ENCODE measurements at regions of chr6 and their contacts with region 1.

Region 1: DNA sequence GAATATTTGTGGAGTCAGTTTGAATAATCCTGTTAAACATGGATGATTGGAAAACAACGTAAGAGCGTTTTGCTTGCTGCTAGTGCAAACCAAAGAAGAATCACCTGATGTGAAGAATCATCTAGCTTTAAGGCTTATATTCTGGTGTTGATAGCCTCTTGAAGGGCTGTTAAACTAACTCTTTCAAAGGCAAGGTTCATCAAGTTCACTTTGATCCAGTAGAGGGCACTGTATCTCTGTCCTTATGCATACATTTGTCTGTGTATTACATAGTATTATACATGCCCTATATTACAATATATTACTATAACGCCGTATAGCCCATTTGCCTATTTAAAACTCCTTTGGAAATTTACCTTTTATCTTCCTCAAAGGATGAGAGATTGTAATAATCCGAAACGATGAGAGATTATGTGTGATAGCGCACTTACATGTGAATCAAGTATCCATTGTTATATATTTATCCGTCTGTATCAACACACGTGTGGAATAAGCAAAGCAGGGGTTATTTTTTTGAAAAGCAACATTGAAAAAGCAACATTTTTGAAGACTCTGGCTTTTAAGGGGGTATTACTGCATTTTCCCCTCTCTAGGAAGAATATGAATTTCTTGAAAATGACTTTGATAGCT is 50.8 kb upstream of the NRN1 start:
- DNase-seq: peak; percentile 36
- H3K4me3 ChIP-seq: no peak overlapping the region
- H3K27ac ChIP-seq: no peak overlapping the region
- H3K4me1 ChIP-seq: no peaks in the 10 kb centered on the region
- H3K27me3 ChIP-seq: no peaks in the 10 kb centered on the region
- CTCF ChIP-seq: peak; percentile 62 to 65

Region 2: GRCh38 chr6:6505111-6505510 is 447.6 kb after region 1 on chr6:
- CTCF ChIA-PET with region 1: no interaction called
- dilution Hi-C with region 1: no loop called
- in situ Hi-C with region 1: loop called in 1 of 2 experiments (anchors 10 kb)
- intact Hi-C with region 1: no loop called
- DNase-seq: no peak
- H3K4me3 ChIP-seq: no peak overlapping the region
- H3K27ac ChIP-seq: no peak overlapping the region
- H3K4me1 ChIP-seq: no peaks in the 10 kb centered on the region
- H3K27me3 ChIP-seq: no peaks in the 10 kb centered on the region
- CTCF ChIP-seq: peak; percentile 15 to 28

Measured in mammary epithelial cell (primary cell).